Ascending aorta (tissue), 2 donors: ENCODE measurements at regions of chr6 and their contacts with region 1.

Region 1: DNA sequence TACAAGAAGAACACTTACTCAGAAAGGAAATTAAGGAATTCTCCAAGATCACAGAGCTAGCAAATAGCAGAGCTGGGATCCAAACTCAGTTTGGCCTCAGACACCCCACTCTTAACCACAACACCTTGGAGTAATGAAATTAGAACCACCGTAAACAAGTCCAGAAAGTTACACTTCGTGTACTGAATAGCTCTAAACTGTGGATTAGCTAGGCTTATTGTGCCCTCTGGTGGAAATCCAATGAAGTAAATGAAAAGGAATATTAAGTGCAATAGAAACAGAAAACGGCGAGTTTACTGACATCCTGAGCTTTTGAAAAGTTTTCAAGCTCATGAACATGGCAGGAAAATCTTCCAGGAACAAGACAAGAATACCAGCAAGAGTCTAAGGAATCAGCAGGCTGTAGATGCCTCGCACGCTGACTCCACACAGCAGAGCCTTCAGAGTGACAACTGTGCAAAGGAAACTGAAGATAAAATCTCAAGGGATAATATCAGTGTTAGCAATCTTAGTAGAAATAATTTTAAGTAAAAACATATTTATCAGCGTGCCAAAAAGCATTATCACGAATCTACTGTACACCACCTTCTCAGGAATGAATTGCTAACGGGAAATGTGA is 34.6 kb downstream of the FBXO5 start:
- DNase-seq: no peak
- H3K4me3 ChIP-seq: peak overlapping the region in 1 of 2 donors; percentile 26
- H3K27ac ChIP-seq: no peak overlapping the region
- H3K4me1 ChIP-seq: no peaks in the 10 kb centered on the region
- H3K27me3 ChIP-seq: no peaks in the 10 kb centered on the region
- CTCF ChIP-seq: peak; percentile 25 to 75 (median 44)

Region 2: DNA sequence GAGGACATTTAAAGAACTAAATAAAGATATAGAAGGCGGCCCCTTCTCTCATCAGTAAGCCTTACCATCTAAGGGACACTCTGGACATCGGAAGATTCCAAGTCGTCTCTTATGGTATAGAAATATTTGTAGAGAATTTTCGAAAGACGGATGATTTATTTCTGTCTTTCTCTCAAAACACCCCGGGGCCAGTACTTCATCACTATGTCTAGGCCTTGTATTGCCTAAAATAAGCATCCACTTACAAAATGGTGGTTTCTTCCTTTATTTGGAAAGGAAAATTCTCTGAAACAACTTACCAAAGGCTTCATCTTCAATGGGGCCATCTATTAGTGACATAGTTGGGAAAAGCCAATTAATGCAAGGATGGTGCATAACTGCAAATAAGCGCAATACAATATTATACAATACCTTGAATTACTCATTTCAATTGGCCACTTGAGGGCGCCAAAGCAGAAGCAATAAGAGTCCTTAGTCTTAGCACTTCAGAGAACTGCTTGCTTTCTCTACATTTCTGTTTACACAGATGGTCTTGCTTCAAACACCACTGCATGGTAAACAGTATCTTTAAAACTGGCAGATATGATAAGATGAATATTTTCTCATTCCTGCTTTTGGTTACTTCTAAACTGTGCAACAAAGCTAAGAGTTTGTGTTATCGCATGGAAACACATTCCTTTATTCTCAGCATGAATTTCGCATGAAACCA is 84.5 kb before region 1 on chr6:
- intact Hi-C with region 1: loop called (anchors 5 kb)
- DNase-seq: peak in 1 of 2 donors; percentile 74
- H3K4me3 ChIP-seq: no peak overlapping the region
- H3K27ac ChIP-seq: no peak overlapping the region
- H3K4me1 ChIP-seq: no peaks in the 10 kb centered on the region
- H3K27me3 ChIP-seq: no peaks in the 10 kb centered on the region
- CTCF ChIP-seq: peak; percentile 41 to 71 (median 57)

Region 3: DNA sequence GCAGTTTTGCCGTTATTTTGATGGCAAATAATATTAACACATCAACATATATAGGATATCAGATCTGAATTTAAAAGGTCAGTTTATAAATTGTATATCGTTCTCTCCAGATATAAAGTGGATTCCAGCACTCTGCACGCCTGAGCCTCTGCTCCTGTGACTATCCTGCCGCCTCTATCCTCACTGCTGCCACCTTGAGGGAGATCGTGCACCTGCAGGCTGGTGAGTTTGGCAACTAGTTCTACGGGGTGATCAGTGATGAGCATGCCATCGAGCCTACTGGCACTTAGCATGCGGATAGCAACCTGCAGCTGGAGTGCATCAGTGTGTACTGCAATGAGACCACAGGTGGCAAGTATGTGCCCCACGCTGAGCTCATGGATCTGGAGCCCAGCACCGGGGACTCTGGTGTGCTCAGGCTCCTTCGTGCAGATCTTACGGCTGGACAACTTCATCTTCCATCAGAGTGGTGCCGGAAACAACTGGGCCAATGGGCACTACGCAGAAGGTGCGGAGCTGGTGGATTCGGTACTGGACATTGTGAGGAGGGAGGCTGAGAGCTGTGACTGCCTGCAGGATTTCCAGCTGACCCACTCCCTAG is 50.4 kb before region 1 on chr6:
- intact Hi-C with region 1: no loop called
- DNase-seq: peak in 1 of 2 donors; percentile 68
- H3K4me3 ChIP-seq: no peak overlapping the region
- H3K27ac ChIP-seq: no peak overlapping the region
- H3K4me1 ChIP-seq: no peaks in the 10 kb centered on the region
- H3K27me3 ChIP-seq: no peaks in the 10 kb centered on the region
- CTCF ChIP-seq: peak; percentile 23 to 70 (median 61)

Region 4: GRCh38 chr6:152932865-152933264 is 15.4 kb before region 1 on chr6:
- intact Hi-C with region 1: no loop called
- DNase-seq: no peak
- H3K4me3 ChIP-seq: no peak overlapping the region
- H3K27ac ChIP-seq: no peak overlapping the region
- H3K4me1 ChIP-seq: no peaks in the 10 kb centered on the region
- H3K27me3 ChIP-seq: no peaks in the 10 kb centered on the region
- CTCF ChIP-seq: no peak